Mammary epithelial cell (primary cell): ENCODE measurements at regions of chr9 and their contacts with region 1.

Region 1: DNA sequence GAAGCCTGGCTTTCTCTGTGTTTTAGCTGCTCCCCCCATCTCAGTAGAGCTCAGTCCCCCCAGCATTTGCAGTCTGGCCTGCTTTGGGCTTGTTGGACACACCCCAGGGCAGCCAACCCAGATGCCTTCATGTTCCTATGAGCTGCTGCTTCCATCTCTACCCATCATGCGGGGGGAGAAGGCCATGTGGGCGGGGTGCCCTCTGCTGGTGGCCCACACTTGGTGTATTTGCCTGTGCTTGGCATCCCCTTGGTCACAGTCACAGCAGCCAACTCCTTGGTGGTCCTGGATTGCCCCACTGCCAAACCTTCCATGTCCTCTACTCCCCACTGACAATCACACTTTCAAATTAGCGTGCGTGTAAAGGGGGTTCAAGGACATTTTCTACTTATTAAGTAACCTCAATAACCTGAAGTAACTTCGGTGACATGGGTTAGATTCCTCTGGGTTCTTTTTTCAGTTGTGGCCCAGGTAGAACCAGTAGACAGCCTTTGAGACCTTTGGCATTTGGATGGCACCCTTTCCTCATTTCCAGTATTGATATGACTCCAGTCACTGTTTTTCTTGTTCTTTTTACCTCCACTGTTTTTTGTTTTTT is 42.8 kb downstream of the SNX30 start:
- DNase-seq: peak; percentile 43
- H3K4me3 ChIP-seq: no peak overlapping the region
- H3K27ac ChIP-seq: no peak overlapping the region
- H3K4me1 ChIP-seq: no peaks in the 10 kb centered on the region
- H3K27me3 ChIP-seq: no peaks in the 10 kb centered on the region
- CTCF ChIP-seq: peak; percentile 83 to 90

Region 2: GRCh38 chr9:112091810-112092209 is 701.5 kb before region 1 on chr9:
- CTCF ChIA-PET with region 1: no interaction called
- dilution Hi-C with region 1: no loop called
- in situ Hi-C with region 1: no loop called
- intact Hi-C with region 1: loop called (anchors 5 kb)
- DNase-seq: no peak
- H3K4me3 ChIP-seq: no peak overlapping the region
- H3K27ac ChIP-seq: no peak overlapping the region
- H3K4me1 ChIP-seq: no peaks in the 10 kb centered on the region
- H3K27me3 ChIP-seq: no peaks in the 10 kb centered on the region
- CTCF ChIP-seq: peak; percentile 14 to 42

Region 3: DNA sequence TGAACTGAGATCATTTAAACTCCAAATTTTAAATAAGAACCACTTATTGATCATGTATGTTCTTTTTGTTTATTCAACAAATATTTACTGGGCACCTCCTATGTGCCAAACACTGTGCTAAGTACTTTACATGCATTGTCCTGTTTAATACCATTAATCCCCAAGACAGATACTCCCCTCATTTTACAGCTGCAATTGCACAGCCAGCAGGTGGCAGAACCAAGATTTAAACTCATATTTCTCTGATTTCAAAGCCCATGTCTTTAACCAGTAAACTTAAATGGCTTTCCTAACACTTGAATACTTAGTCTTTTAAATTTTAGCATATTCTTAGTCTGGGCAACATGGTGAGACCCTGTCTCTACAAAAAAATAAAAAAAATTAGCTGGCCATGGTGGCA is 350.1 kb before region 1 on chr9:
- CTCF ChIA-PET with region 1: no interaction called
- dilution Hi-C with region 1: no loop called
- in situ Hi-C with region 1: no loop called
- intact Hi-C with region 1: loop called (anchors 5 kb)
- DNase-seq: no peak
- H3K4me3 ChIP-seq: no peak overlapping the region
- H3K27ac ChIP-seq: no peak overlapping the region
- H3K4me1 ChIP-seq: no peaks in the 10 kb centered on the region
- H3K27me3 ChIP-seq: no peaks in the 10 kb centered on the region
- CTCF ChIP-seq: peak; percentile 43 to 51

Region 4: DNA sequence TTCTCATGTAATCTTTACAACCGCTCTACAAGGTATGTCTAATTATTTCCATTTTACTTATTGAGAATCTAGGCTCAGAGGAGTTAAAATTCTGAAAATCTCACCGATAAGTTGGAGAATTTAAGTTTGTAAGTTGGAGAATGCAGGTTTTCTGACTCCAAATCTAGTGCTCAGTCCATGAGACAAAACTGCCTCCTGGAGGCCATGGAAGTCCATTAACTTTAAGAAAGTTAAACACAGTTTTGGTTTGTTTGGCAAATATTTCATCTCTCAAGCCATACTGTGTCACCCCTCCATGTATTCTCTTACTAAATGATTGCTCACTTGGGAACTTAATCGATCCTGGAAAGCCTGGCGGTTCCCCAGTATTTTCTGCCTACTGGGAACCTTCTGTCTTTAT is 128.0 kb before region 1 on chr9:
- CTCF ChIA-PET with region 1: no interaction called
- dilution Hi-C with region 1: no loop called
- in situ Hi-C with region 1: no loop called
- intact Hi-C with region 1: loop called (anchors 5 kb)
- DNase-seq: peak; percentile 11
- H3K4me3 ChIP-seq: no peak overlapping the region
- H3K27ac ChIP-seq: no peak overlapping the region
- H3K4me1 ChIP-seq: no peaks in the 10 kb centered on the region
- H3K27me3 ChIP-seq: no peaks in the 10 kb centered on the region
- CTCF ChIP-seq: peak; percentile 38 to 55

Region 5: DNA sequence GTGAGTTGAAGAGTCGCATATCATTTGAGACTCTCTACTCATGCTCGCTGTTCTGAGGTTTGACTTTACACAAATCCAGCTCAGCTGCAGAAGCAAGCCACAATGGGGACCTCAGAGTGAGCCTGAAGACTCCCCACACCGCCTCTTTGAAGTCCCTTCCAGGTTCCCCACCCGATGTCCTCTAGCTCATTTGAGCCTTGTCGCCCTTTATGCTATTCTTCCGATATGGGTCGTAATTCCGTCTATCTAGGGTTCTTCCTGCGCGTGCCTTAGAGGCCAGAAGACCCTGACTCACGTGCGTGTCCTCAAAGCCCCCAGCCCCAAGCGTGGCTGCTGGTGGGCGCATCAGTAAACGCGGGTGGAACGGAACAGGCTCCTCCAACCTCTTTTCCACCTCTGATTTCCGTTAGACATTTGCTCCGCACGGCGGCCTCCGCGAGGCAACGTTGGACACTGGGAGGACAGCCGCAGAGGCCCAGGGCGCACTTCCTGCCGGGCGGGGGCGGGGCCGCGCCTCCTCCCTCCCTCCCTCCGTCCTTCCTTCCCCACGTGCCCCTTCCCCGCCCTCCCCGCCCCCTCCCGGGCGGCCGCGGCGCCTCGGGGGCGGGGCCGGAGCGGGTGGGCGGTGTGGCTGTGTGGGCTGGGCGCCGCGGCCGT is 43.1 kb before region 1 on chr9 and contains the start of gene SNX30:
- CTCF ChIA-PET with region 1: no interaction called
- dilution Hi-C with region 1: no loop called
- in situ Hi-C with region 1: no loop called
- intact Hi-C with region 1: loop called (anchors 5 kb)
- DNase-seq: peak; percentile 88
- H3K4me3 ChIP-seq: peak within 1 kb of the TSS; percentile 83 to 91 (median 86)
- H3K27ac ChIP-seq: peak within 1 kb of the TSS; percentile 30
- H3K4me1 ChIP-seq: peaks cover 45% of the 10 kb centered on the region
- H3K27me3 ChIP-seq: no peaks in the 10 kb centered on the region
- CTCF ChIP-seq: peak in 1 of 2 donors; percentile 7
- total RNA-seq, gene SNX30: 9.8 to 20.8 TPM

Region 6: GRCh38 chr9:112819635-112820496 is 26.6 kb after region 1 on chr9:
- CTCF ChIA-PET with region 1: no interaction called
- dilution Hi-C with region 1: no loop called
- in situ Hi-C with region 1: no loop called
- intact Hi-C with region 1: no loop called
- DNase-seq: peak; percentile 55
- H3K4me3 ChIP-seq: no peak overlapping the region
- H3K27ac ChIP-seq: no peak overlapping the region
- H3K4me1 ChIP-seq: no peaks in the 10 kb centered on the region
- H3K27me3 ChIP-seq: no peaks in the 10 kb centered on the region
- CTCF ChIP-seq: peak; percentile 64 to 77